ENCODE measurements at regions of chr14 and their contacts with region 1.

Region 1: GRCh38 chr14:99793213-99794150 is at the start of gene EML1:
- DNase-seq: peak; percentile 81
- total RNA-seq, gene EML1: 29.9 TPM

Region 2: DNA sequence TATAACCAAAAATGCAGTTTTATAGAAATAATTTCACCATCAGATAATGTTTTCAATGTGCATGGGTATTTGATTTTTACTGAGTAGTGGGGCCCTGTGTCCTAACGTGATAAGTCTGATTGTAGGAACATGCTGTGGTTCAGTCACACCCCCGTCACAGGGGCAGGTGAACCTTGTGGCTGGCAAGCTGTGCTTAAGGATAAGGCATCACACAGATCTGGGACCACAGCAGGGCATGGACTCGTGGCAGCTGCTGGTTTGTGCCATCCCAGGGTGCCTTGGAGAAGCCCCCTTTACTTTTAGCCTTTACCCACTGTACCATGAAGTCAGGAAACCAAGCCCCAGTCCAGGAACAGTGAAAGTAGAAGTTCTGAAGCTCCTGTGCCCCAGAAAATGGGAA is 295.6 kb before region 1 on chr14:
- intact Hi-C with region 1: no loop called
- DNase-seq: no peak

Region 3: DNA sequence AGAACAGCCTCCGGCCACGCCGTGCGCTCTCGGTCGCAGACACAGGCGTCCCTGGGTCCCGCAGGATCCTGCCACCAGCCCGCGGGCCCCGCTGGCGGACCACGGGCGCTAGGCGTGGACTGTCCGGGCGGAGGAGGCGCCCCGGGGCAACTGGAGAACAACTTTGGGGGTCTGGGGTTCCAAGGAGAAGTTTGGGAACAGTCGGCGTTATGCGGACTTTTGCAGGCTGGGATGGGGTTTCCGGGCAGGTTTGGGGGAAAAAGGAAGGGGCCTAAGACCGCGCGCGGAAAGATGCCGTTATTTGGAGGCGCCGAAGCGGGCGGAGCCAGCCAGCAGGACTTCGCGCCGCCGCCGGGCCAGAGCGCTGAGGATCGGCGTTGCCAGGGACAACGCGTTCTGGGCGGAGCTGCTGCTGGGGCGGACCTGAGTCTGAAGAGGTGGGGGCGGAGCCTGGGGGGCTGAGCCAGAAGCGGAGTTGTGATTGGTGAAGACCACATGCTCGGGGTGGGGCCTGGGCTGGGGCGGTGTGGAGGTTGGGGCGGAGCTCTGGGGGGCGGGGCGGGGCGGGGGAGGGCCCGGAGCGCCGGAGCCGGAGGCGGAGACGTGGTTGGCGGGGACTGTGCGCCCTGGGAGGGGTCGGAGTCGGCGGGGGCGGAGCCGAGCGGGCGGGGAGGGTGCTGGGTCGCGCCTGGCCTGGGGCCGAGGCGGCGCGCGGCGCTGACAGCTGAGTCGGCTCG is 109.7 kb before region 1 on chr14 and contains the start of gene CYP46A1:
- intact Hi-C with region 1: loop called (anchors 5 kb)
- DNase-seq: peak; percentile 99
- total RNA-seq, gene CYP46A1: 5.5 TPM

Region 4: GRCh38 chr14:99729991-99730868 is 63.3 kb before region 1 on chr14:
- intact Hi-C with region 1: loop called (anchors 2 kb)
- DNase-seq: peak; percentile 82

Region 5: GRCh38 chr14:99737956-99738667 is 55.4 kb before region 1 on chr14:
- intact Hi-C with region 1: loop called (anchors 2 kb)
- DNase-seq: no peak

Region 6: GRCh38 chr14:99884834-99885648 is 91.6 kb after region 1 on chr14:
- intact Hi-C with region 1: loop called (anchors 5 kb)
- DNase-seq: no peak

Region 7: GRCh38 chr14:100341301-100342031 is 548.0 kb after region 1 on chr14:
- intact Hi-C with region 1: no loop called
- DNase-seq: no peak

Measured in cardiac septum (tissue), 1 donor.